Posterior cingulate gyrus (tissue), 11 donors: ENCODE measurements at regions of chr6 and their contacts with region 1.

Region 1: DNA sequence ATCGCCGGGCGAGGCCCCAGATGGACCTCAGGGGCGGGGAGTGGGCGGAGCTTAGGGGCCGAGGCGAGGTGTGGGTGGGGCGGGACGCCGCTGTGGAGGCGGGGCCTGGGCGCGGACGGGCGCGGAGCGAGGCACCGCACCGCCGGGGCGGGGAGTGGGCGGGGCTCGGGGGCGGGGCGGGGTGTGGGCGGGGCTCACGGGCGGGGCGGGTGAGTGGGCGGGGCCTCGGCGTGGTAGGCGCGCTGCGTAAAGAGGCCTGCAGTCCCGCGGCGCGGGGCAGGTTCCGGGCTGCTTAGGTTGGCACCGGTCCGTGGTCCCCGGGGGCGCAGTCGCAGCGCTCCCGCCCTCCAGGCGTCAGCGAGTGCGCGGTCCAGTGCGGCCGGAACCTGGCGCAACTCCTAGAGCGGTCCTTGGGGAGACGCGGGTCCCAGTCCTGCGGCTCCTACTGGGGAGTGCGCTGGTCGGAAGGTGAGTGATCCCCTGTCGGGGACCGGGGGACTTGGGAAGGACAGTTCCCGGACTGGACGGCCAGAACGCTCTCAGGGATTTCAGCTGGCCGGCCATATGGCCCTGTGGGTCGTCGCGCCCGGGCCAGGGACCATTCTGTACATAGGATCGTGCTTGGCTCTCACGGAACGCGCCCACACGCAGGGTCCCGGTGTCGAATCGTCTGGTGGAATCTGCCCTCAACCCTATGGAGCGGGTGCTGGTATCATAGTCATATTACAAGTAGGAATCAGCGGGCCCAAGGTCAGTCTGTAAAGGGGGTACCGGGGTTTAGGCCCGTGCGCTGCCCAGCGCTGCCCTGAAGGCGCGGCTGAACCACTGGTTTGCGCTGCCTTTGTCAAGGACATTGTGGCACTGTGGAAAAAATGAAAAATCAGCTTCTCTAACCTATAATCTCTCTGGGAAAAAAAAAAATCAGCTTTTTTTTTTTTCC is at the start of gene NQO2:
- DNase-seq: peak; percentile 84 to 98 (median 90)

Region 2: DNA sequence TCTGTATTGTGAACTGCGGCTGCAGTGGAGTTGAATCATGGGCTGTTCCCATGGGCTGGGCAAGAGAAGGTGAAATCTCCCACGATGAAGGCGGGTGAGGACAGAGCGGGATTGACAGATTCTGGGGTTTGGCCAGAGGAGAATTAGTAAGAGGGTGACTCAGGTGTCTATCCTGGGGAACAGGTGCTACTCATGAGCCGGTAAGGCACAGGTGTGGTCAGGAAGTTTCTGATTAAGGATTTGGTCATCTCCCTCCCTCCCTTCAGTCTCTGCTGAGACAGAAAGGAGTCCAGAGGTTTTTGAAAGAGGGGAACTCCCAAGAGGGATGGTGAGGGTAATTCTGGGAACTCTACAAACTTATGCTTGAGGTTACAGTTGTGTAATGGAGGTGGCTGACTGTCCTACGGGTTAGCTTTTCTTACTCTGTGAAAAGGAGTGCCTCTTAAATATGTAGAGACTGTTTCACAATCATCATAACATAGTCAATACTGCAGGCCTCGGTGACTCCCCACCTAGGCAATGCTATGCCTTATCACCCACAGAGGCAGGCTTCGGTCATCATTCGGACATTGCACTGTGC is 189.7 kb before region 1 on chr6:
- intact Hi-C with region 1: no loop called
- DNase-seq: peak in 1 of 10 donors; percentile 8

Region 3: DNA sequence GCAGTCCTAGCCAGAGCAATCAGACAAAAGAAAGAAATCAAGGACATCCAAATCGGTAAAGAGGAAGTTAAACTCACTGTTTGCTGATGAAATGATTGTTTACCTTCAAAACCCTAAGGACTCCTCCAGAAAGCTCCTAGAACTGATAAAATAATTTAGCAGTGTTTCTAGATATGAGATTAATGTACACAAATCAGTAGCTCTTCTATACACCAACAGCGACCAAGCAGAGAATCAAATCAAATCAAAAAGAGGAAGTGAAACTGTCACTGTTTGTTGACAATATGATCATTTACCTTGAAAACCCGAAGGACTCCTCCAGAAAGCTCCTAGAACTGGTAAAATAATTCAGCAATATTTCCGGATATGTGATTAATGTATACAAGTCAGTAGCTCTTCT is 118.5 kb before region 1 on chr6:
- intact Hi-C with region 1: no loop called
- DNase-seq: no peak

Region 4: DNA sequence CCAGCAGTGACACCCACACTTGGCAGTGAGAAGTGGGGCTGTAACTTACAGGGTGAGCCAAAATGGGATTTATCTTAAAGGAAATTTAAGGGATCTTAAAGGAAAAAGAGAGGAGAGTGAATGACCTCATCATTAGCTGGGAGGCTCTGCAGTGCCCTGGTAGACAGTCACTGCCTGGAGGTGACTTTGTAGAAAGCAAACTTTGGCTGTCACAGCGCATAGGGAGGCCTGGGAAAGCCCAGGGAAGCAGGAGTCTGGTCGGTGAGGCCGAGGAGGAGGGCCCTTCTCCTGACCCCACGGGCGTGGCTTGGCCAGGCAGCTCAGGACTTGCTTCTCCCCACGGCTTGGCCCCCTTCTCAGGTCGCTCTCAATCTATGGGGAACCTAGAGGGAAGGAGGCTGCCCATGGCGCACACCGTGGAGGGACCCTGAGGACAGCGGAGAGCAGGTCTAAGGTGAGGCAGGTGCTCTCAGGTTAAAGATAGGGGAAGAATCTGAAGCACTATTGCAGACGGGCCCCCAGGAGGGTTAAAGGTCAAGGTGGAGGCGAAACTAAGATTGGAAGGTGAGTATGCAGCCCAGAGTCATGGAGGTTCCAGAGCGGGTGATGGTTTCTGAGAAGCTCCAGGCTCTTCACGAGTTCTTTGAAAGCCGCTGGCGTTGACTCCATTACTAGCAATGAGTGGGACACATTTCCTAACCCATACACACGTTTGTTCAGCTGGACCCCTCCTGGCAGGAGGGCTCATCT is 52.8 kb after region 1 on chr6:
- intact Hi-C with region 1: loop called (anchors 2 kb)
- DNase-seq: no peak